Posterior cingulate gyrus (tissue), 11 donors: ENCODE measurements at regions of chr19 and their contacts with region 1.

Region 1: DNA sequence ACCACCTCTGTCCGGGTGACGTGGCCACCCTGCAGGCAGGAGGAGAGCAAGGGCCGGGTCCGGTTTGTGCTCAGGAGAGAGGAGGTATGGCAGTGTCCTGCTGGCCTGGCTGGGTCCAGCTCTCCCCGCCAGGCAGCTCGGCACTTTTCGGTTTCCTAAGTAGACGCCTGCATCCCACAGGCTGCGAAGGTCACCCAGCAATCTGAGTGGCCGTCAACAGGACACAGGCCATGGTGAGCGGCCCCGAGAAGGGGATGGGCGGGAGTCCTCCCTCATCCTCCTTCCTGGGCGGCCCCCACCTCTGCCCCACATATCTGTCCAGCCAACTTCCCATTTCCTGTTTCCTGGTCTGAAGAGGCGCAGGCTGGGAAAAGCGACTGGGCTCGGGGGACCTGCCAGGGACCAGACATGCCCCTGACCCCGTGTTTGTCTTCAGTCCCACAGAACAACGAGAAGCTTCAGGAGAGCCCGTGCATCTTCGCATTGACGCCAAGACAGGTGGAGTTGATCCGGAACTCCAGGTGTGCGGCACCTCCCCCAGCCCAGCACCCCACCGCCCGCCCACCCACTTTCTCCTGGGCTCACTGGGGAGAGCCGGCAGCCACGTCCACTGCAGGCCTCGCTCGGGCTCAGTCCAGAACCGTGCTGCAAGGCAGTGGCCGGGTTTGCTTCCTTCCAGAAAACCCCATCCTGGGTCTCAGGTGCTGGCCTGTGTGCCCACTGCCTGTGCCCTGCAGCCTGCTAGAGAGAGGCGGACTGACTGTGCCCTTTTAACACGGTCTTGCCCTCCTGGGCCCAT is 16.3 kb downstream of the PIAS4 start:
- DNase-seq: peak in 1 of 10 donors; percentile 78

Region 2: DNA sequence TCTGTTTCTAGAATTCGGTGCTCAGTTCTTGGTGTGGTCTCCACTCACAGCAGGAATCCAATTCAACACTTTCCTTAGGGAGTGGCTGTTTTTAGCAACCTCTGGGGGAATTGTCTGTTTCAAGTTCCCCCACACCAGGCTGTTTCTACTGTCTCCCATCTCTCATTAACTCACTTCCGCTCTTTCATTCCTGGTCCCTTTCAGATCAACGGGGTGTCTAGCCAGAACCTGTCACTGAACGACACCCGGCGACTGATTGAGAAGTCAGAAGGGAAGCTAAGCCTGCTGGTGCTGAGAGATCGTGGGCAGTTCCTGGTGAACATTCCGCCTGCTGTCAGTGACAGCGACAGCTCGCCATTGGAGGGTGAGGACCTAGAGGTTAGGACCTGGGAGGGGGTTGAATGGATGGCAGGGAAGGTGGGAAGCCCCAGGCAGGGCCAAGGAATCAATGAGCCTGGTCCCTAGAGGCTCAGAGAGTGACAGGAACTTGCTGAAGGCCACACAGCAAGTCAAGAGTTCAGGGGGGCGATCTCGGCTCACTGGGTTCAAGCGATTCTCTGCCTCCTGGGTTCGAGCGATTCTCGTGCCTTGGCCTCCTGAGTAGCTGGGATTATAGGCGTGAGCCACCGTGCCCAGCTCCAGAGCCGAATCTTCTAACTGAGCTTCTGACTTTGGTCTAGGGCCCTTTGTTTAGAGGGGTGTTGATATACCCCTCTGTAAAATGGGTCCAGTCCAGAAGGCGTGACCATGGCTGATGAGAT is 290.1 kb before region 1 on chr19:
- intact Hi-C with region 1: no loop called
- DNase-seq: no peak

Region 3: DNA sequence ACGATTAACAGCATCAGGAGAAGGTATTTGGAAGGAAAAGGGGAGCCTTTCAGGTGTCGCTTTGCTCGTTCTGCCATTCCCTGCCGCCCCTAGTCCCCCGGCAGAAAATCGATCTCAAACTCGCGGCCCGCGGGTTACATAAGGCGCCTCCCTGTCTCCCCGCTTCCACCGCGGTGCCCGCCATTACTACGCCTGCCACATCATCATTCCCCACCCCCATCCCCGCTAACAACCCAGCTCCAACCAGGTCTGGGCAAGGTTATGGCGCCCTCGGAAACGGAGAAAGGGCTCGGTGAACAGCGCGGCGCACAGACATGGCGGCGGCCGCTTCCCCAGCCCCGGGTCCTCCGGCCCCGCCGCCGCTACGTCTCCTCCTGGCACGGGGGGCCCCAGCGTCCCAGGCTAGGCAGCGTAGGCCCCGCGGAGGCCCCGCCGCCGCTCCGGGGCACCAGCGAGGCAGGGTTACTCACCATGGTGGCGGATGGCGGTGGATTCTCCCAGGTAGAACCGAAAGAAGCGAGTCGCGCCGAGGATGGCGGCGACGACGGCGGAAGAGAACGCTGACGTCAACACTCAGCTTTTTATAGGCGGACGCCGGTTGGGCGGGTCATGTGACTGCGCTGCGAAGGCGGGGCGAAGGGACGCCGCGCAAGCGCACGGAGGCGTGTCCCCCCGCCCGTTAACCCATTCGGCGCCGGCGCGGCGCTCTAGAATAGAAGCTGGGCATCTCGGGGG is 38.7 kb before region 1 on chr19 and contains the start of gene EEF2:
- intact Hi-C with region 1: no loop called
- DNase-seq: peak; percentile 79 to 98 (median 85)

Region 4: GRCh38 chr19:4058034-4058692 is 34.4 kb after region 1 on chr19:
- intact Hi-C with region 1: loop called (anchors 5 kb)
- DNase-seq: peak in 4 of 10 donors; percentile 57 to 90 (median 79)